ENCODE measurements at regions of chr20 and their contacts with region 1.

Region 1: GRCh38 chr20:49904456-49905214 is 10.7 kb downstream of the SPATA2 start:
- DNase-seq: no peak
- ATAC-seq: no peak
- H3K4me3 ChIP-seq: no peak overlapping the region
- H3K27ac ChIP-seq: no peak overlapping the region
- H3K4me1 ChIP-seq: no peaks in the 10 kb centered on the region; the same call in 1 of the 2 replicates
- H3K27me3 ChIP-seq: no peaks in the 10 kb centered on the region
- CTCF ChIP-seq: no peak

Region 2: DNA sequence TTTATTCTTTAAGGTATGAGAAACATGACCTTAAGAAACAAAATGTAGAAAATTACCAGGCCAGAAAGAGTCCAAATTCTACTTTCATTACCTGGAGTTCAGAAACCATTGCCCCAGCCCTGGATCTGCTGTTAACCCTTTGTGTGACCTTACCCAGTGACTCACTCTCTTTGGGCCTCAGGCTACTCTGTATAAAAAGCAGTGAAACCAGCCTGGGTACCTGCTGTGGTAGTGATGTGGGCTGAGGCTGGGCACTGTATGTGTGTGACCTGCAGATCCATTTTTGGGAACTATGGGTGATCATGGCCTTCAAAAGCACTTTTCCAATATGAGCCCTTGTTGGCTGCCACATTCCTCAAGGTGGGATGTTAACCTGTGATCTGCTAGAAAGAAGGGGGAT is 44.8 kb before region 1 on chr20:
- CTCF ChIA-PET with region 1: no interaction called
- POLR2A ChIA-PET with region 1: interaction called, 24 read pairs
- in situ Hi-C with region 1: no loop called
- intact Hi-C with region 1: no loop called
- DNase-seq: no peak
- ATAC-seq: no peak
- H3K4me3 ChIP-seq: no peak overlapping the region
- H3K27ac ChIP-seq: no peak overlapping the region
- H3K4me1 ChIP-seq: peaks cover 4% of the 10 kb centered on the region; the same call in 1 of the 2 replicates
- H3K27me3 ChIP-seq: no peaks in the 10 kb centered on the region
- CTCF ChIP-seq: no peak

Region 3: GRCh38 chr20:50372776-50373167 is 468.1 kb after region 1 on chr20:
- CTCF ChIA-PET with region 1: no interaction called
- POLR2A ChIA-PET with region 1: no interaction called
- in situ Hi-C with region 1: no loop called
- intact Hi-C with region 1: no loop called
- DNase-seq: no peak
- ATAC-seq: no peak
- H3K4me3 ChIP-seq: no peak overlapping the region
- H3K27ac ChIP-seq: no peak overlapping the region; the same call in 1 of the 2 replicates
- H3K4me1 ChIP-seq: peaks cover 15% of the 10 kb centered on the region
- H3K27me3 ChIP-seq: no peaks in the 10 kb centered on the region
- CTCF ChIP-seq: no peak